A673 (cell line): ENCODE measurements at regions of chr7 and their contacts with region 1.

Region 1: GRCh38 chr7:111083413-111083812 is 7.5 kb upstream of the LRRN3 start:
- DNase-seq: no peak
- H3K4me3 ChIP-seq: no peak overlapping the region
- H3K27ac ChIP-seq: no peak overlapping the region
- H3K4me1 ChIP-seq: no peaks in the 10 kb centered on the region
- H3K27me3 ChIP-seq: no peaks in the 10 kb centered on the region
- CTCF ChIP-seq: no peak

Region 2: GRCh38 chr7:109259151-109259550 is 1824.3 kb before region 1 on chr7:
- CTCF ChIA-PET with region 1: no interaction called
- POLR2A ChIA-PET with region 1: no interaction called
- intact Hi-C with region 1: no loop called
- DNase-seq: peak; percentile 35
- H3K4me3 ChIP-seq: no peak overlapping the region
- H3K27ac ChIP-seq: no peak overlapping the region
- H3K4me1 ChIP-seq: no peaks in the 10 kb centered on the region
- H3K27me3 ChIP-seq: no peaks in the 10 kb centered on the region
- CTCF ChIP-seq: no peak

Region 3: GRCh38 chr7:111006691-111007090 is 76.7 kb before region 1 on chr7:
- CTCF ChIA-PET with region 1: no interaction called
- POLR2A ChIA-PET with region 1: interaction called, 15 read pairs
- intact Hi-C with region 1: no loop called
- DNase-seq: no peak
- H3K4me3 ChIP-seq: no peak overlapping the region
- H3K27ac ChIP-seq: no peak overlapping the region
- H3K4me1 ChIP-seq: no peaks in the 10 kb centered on the region
- H3K27me3 ChIP-seq: no peaks in the 10 kb centered on the region
- CTCF ChIP-seq: no peak

Region 4: DNA sequence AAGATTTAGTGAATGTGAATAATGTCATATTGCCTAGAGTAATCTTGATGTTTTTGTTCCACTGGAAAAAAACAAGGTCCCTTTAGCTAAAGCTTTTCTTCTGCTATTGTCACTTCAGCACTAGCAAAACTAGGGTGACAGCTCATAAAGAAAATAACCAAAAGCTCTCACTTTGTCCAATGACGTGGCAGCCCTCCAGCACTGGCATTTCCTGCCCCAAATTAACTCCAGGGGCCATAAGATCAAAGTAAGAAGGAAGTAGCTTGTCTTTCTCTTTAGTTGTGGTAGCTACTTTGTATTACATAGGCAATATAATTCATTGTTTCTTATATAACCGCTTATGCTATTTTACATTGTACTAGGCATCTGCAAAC is 54.8 kb after region 1 on chr7:
- CTCF ChIA-PET with region 1: interaction called, 17 read pairs
- POLR2A ChIA-PET with region 1: no interaction called
- intact Hi-C with region 1: no loop called
- DNase-seq: peak; percentile 87
- H3K4me3 ChIP-seq: peak overlapping the region; percentile 5
- H3K27ac ChIP-seq: peak overlapping the region; percentile 74
- H3K4me1 ChIP-seq: peaks cover 25% of the 10 kb centered on the region
- H3K27me3 ChIP-seq: no peaks in the 10 kb centered on the region
- CTCF ChIP-seq: no peak